SK-N-SH (cell line): ENCODE measurements at regions of chr9 and their contacts with region 1.

Region 1: GRCh38 chr9:124839612-124840299 is 13.5 kb upstream of the WDR38 start:
- DNase-seq: peak; percentile 77
- H3K4me3 ChIP-seq: no peak overlapping the region
- H3K27ac ChIP-seq: no peak overlapping the region
- H3K4me1 ChIP-seq: peaks cover 11% of the 10 kb centered on the region in 2 experiments; a peak in 3 of 4 replicates
- H3K27me3 ChIP-seq: no peaks in the 10 kb centered on the region
- CTCF ChIP-seq: peak; percentile 63
- EP300 ChIP-seq: no peak
- RAD21 ChIP-seq: peak; percentile 31

Region 2: GRCh38 chr9:124749781-124750180 is 90.0 kb before region 1 on chr9:
- CTCF ChIA-PET with region 1: no interaction called
- POLR2A ChIA-PET with region 1: no interaction called
- DNase-seq: no peak
- H3K4me3 ChIP-seq: no peak overlapping the region
- H3K27ac ChIP-seq: peak overlapping the region in 1 of 2 experiments; percentile 38; a peak in 2 of 4 replicates
- H3K4me1 ChIP-seq: peaks cover 3 to 24% of the 10 kb centered on the region in 2 experiments; a peak in 3 of 4 replicates
- H3K27me3 ChIP-seq: no peaks in the 10 kb centered on the region
- CTCF ChIP-seq: no peak
- EP300 ChIP-seq: no peak
- RAD21 ChIP-seq: no peak

Region 3: GRCh38 chr9:124794902-124795491 is 44.8 kb before region 1 on chr9:
- CTCF ChIA-PET with region 1: interaction called, 13 read pairs
- POLR2A ChIA-PET with region 1: no interaction called
- DNase-seq: no peak
- H3K4me3 ChIP-seq: no peak overlapping the region
- H3K27ac ChIP-seq: no peak overlapping the region
- H3K4me1 ChIP-seq: peaks cover 4 to 15% of the 10 kb centered on the region in 2 experiments; a peak in 3 of 4 replicates
- H3K27me3 ChIP-seq: no peaks in the 10 kb centered on the region
- CTCF ChIP-seq: no peak
- EP300 ChIP-seq: no peak
- RAD21 ChIP-seq: no peak

Region 4: GRCh38 chr9:124818431-124819281 is 21.1 kb before region 1 on chr9:
- CTCF ChIA-PET with region 1: interaction called, 11 read pairs
- POLR2A ChIA-PET with region 1: interaction called, 4 read pairs
- DNase-seq: peak; percentile 71
- H3K4me3 ChIP-seq: no peak overlapping the region
- H3K27ac ChIP-seq: peak overlapping the region in 1 of 2 experiments; percentile 8; a peak in 2 of 4 replicates
- H3K4me1 ChIP-seq: peaks cover 0 to 8% of the 10 kb centered on the region in 2 experiments; a peak in 2 of 4 replicates
- H3K27me3 ChIP-seq: no peaks in the 10 kb centered on the region
- CTCF ChIP-seq: no peak
- EP300 ChIP-seq: peak; percentile 35 to 55; a peak in 3 of 4 replicates
- RAD21 ChIP-seq: no peak